CD14-positive monocyte (primary cell): ENCODE measurements at regions of chr22 and their contacts with region 1.

Region 1: GRCh38 chr22:45336971-45337431 is 27.3 kb downstream of the FAM118A start:
- DNase-seq: no peak
- H3K4me3 ChIP-seq: no peak overlapping the region
- H3K4me3 Mint-ChIP-seq: no peak overlapping the region
- H3K27ac ChIP-seq: no peak overlapping the region
- H3K27ac Mint-ChIP-seq: peak overlapping the region in 2 of 7 donors; percentile 40 to 73
- H3K4me1 ChIP-seq: no peaks in the 10 kb centered on the region
- H3K4me1 Mint-ChIP-seq: no peaks in the 10 kb centered on the region
- H3K27me3 ChIP-seq: no peaks in the 10 kb centered on the region
- H3K27me3 Mint-ChIP-seq: no peaks in the 10 kb centered on the region
- CTCF ChIP-seq: no peak

Region 2: GRCh38 chr22:45376703-45377102 is 39.7 kb after region 1 on chr22:
- intact Hi-C with region 1: no loop called
- DNase-seq: peak; percentile 53 to 83 (median 70)
- H3K4me3 ChIP-seq: peak overlapping the region in 1 of 3 experiments; percentile 6
- H3K4me3 Mint-ChIP-seq: peak overlapping the region in 1 of 2 donors; percentile 35
- H3K27ac ChIP-seq: peak overlapping the region in 1 of 2 donors; percentile 73
- H3K27ac Mint-ChIP-seq: peak overlapping the region; percentile 26 to 86 (median 84)
- H3K4me1 ChIP-seq: peaks cover 17 to 22% of the 10 kb centered on the region in 2 donors
- H3K4me1 Mint-ChIP-seq: peaks cover 23% of the 10 kb centered on the region
- H3K27me3 ChIP-seq: no peaks in the 10 kb centered on the region
- H3K27me3 Mint-ChIP-seq: peaks cover 0 to 4% (median 0%) of the 10 kb centered on the region in 3 donors
- CTCF ChIP-seq: no peak

Region 3: DNA sequence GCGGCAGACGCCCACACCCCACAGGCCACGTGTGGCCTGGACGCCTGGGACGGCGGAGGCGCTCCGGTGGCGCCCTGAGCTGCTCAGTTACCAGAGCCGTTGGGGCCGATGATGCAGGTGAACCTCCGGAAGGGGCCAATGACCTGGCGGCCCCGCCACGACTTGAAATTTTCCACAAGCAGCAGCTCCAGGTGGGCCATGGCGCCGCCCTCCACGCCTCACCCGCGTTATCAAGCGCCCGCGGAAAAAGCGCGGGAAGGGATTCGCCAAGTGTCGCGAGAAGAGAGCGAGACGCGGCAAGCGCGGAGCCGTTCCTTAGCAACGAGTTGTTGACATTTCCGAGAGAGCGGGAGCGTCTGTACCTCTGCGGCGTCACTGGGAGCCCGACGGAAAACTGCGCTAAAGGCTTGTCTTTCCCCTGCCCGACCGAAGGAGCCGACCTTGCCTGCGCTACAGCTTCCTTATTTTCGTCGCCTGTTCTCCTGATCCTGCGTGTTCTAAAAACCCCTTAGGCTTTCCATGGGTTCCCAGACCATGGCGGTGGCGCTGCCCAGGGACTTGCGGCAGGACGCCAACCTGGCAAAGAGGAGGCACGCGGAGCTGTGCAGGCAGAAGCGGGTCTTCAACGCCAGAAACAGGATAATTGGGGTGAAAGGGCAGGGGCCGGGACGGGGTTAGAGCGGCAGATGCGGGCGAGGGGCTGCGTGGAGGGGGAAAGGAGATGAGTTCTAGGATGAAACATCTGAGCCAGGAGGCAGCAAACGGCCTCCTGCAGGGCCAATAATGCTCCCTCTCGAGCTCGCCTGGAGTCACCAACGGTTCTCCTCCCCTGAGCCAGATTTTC is 76.6 kb after region 1 on chr22 and contains the starts of genes RIBC2 and SMC1B:
- intact Hi-C with region 1: loop called in 1 of 2 experiments (anchors 10 kb)
- DNase-seq: peak; percentile 70 to 84 (median 71)
- H3K4me3 ChIP-seq: peak within 1 kb of the TSS; percentile 15 to 75 (median 67)
- H3K4me3 Mint-ChIP-seq: peak within 1 kb of the TSS; percentile 83 to 92
- H3K27ac ChIP-seq: peak within 1 kb of the TSS in 1 of 2 donors; percentile 58
- H3K27ac Mint-ChIP-seq: peak within 1 kb of the TSS; percentile 42 to 92 (median 87)
- H3K4me1 ChIP-seq: peaks cover 16 to 17% of the 10 kb centered on the region in 2 donors
- H3K4me1 Mint-ChIP-seq: peaks cover 13% of the 10 kb centered on the region
- H3K27me3 ChIP-seq: no peaks in the 10 kb centered on the region
- H3K27me3 Mint-ChIP-seq: peaks cover 0 to 8% (median 0%) of the 10 kb centered on the region in 3 donors
- CTCF ChIP-seq: no peak
- polyA plus RNA-seq, gene RIBC2: not detected
- polyA plus RNA-seq, gene SMC1B: not detected